ENCODE measurements at regions of chr17 and their contacts with region 1.

Region 1: GRCh38 chr17:28750178-28751047 is 6.6 kb downstream of the TRAF4 start:
- DNase-seq: peak; percentile 84
- CTCF ChIP-seq: peak; percentile 100

Region 2: GRCh38 chr17:28133562-28133970 is 616.8 kb before region 1 on chr17:
- CTCF ChIA-PET with region 1: no interaction called
- POLR2A ChIA-PET with region 1: no interaction called
- DNase-seq: no peak
- CTCF ChIP-seq: no peak

Region 3: DNA sequence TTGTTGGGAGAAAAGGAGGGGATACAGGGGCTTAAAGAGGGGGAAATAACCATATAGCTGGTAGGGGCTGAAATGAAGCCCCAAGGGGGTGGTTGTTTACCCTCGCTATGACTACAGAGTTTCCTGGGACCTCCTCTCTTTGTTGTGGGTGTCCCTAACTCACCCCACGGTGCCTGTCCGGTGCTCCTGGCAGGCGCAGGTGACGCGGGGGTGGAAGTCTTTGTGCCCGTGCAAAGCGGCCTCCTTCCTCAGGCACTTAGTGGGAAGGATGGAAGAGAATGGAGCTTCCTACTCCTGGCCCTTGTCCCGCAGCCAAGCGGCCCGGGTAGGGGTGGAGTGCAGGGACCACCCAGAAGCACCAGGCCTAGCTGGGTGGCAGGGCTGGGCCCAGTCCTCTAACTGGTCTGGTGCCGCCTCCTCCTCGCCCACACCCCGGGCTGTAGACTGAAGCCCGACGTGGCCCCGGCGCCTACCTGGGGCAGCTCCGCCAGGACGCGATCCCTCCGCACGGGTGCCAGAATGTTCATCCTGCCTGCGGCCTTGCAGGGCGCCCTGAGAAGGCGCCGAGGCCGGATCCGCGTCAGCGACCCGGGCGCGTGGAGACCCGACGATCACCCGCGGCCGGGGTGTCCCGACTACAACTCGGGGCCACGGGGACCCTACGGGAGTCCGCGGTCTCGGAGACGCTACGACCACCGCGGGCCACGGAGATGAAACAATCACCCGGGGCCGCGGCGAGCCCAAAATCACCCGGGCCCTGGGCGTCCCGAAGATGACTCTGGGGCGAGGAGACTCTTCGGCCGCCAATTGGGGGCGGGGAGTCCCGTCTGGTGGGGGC is 33.5 kb before region 1 on chr17:
- CTCF ChIA-PET with region 1: interaction called, 18 read pairs
- POLR2A ChIA-PET with region 1: interaction called, 7 read pairs
- DNase-seq: no peak
- CTCF ChIP-seq: no peak

Region 4: DNA sequence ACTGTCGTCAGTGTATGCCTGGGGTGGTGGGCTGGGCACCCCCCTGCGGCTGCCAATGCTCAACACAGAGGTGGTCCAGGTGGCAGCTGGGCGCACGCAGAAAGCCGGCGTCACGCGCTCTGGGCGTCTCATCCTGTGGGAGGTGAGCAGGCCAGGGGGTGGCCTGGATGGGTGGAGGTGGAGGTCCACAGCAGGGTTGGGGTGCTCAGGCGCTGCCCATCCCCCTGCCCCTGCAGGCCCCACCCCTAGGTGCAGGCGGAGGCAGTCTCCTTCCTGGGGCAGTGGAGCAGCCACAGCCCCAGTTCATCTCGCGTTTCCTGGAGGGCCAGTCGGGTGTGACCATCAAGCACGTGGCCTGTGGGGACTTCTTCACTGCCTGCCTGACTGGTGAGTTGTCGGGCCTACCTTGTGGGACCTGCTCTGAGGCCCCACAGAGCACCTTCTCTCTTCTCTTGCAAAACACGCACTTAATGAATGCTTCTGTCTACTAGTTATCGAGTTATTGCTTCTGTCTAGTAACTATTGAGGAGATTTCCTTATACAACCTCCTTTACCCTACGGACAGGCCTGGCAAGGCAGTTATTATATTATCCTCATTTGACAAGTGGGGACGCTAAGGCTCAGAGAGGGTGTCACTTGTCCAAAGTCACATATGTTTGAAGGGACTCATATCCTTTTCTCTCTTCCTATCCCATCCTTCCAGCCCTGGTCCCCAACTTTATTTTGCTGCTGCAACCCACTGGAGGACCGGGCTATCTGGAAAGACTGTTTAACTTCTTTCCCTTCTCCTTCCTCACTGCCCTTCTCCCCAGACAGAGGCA is 12.3 kb before region 1 on chr17:
- CTCF ChIA-PET with region 1: interaction called, 20 read pairs
- POLR2A ChIA-PET with region 1: interaction called, 4 read pairs
- DNase-seq: peak; percentile 86
- CTCF ChIP-seq: no peak

Region 5: DNA sequence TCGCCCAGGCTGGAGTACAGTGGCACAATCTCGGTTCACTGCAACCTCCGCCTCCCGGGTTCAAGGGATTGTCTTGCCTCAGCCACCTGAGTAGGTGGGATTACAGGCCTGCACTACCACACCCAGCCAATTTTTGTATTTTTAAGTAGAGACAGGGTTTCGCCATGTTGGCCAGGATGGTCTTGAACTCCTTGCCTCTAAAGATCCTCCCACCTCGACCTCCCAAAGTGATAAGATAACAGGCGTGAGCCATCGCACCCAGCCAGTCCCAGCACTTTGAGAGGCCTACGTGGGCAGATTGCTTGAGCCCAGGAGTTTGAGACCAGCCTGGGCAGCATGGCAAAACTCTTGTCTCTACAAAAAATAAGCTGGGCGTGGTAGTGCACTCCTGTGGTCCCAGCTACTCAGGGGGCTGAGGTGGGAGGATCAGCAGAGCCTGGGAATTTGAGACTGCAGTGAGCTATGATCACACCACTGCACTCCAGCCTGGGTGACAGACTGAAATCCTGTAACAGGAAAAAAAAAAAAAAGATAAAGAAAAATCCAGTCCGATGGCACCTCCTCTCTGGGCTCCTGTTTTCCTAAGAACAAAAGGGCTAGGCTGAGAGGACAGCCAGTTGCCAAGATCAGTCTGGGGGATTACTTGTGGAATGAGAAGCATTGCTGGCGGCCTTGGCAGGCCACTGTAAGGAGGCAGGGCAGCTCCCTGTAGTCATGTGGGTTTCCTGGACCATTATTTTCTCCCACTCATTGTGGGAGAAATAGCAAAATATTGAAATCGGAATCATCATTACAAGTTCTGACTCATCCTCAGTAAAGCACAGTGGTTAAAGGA is 289.6 kb after region 1 on chr17:
- CTCF ChIA-PET with region 1: no interaction called
- POLR2A ChIA-PET with region 1: no interaction called
- DNase-seq: no peak
- CTCF ChIP-seq: no peak